ENCODE measurements at regions of chr1 and their contacts with region 1.

Region 1: DNA sequence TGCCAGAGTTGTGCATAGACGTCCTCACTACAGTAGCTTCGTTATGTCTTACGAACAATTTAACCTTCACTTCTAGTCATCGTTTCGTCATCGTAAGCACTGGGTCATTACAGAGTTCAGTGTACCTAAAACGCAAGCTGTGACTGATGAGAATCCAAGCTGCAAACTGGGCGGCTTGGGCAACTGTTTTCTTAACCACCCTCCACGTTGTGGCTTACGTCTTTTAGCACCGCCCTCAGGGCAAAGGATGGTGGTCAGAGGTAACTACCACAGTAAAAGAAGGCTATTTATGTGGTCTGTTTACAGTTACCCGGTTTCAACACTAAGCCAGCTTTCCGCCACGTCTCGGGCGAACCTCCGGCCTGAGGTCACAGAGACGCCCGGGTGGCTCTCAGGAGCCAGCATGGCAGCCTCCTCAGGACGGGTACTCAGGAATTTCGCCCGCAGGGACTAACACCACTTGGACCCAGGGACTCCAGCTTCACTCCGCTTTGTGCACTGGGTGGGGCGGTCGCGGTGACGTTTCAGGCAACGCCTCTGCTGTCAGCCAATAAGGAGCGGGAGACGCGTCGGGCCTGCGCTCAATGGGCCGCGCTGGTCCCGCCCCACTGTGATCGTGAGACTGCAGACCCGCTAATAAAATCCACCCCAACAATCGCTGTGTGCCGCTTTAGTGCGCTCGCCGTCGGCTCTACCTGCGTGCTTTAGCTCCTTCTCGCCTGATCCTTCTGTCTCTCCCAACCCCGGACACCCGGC is at the start of gene CTH:
- DNase-seq: peak; percentile 95
- ATAC-seq: peak; percentile 98
- H3K4me3 ChIP-seq: peak within 1 kb of the TSS; percentile 85 to 88
- H3K27ac ChIP-seq: peak within 1 kb of the TSS; percentile 65
- H3K4me1 ChIP-seq: peaks cover 6 to 25% of the 10 kb centered on the region in 2 experiments
- H3K27me3 ChIP-seq: no peaks in the 10 kb centered on the region
- CTCF ChIP-seq: no peak
- POLR2A ChIP-seq: peak; percentile 97
- RAD21 ChIP-seq: no peak
- total RNA-seq, gene CTH: 14.7 TPM

Region 2: GRCh38 chr1:69836971-69837636 is 573.7 kb before region 1 on chr1:
- CTCF ChIA-PET with region 1: no interaction called
- POLR2A ChIA-PET with region 1: no interaction called
- RAD21 ChIA-PET with region 1: no interaction called
- intact Hi-C with region 1: no loop called
- DNase-seq: no peak
- ATAC-seq: no peak
- H3K4me3 ChIP-seq: no peak overlapping the region
- H3K27ac ChIP-seq: no peak overlapping the region
- H3K4me1 ChIP-seq: no peaks in the 10 kb centered on the region
- H3K27me3 ChIP-seq: 0 out of 2 replicates have a peak, but pooled peaks cover 3% of the 10 kb centered on the region
- CTCF ChIP-seq: no peak
- POLR2A ChIP-seq: no peak
- RAD21 ChIP-seq: no peak

Region 3: GRCh38 chr1:70221241-70222121 is 189.3 kb before region 1 on chr1 and contains the start of gene SRSF11:
- CTCF ChIA-PET with region 1: no interaction called
- POLR2A ChIA-PET with region 1: no interaction called
- RAD21 ChIA-PET with region 1: no interaction called
- intact Hi-C with region 1: loop called (anchors 10 kb)
- DNase-seq: peak; percentile 85
- ATAC-seq: peak; percentile 96
- H3K4me3 ChIP-seq: peak within 1 kb of the TSS; percentile 74 to 78
- H3K27ac ChIP-seq: peak within 1 kb of the TSS; percentile 96
- H3K4me1 ChIP-seq: peaks cover 4 to 16% of the 10 kb centered on the region in 2 experiments; a peak in 3 of 4 replicates
- H3K27me3 ChIP-seq: no peaks in the 10 kb centered on the region
- CTCF ChIP-seq: no peak
- POLR2A ChIP-seq: peak; percentile 55
- RAD21 ChIP-seq: no peak
- total RNA-seq, gene SRSF11: 166 TPM

Region 4: DNA sequence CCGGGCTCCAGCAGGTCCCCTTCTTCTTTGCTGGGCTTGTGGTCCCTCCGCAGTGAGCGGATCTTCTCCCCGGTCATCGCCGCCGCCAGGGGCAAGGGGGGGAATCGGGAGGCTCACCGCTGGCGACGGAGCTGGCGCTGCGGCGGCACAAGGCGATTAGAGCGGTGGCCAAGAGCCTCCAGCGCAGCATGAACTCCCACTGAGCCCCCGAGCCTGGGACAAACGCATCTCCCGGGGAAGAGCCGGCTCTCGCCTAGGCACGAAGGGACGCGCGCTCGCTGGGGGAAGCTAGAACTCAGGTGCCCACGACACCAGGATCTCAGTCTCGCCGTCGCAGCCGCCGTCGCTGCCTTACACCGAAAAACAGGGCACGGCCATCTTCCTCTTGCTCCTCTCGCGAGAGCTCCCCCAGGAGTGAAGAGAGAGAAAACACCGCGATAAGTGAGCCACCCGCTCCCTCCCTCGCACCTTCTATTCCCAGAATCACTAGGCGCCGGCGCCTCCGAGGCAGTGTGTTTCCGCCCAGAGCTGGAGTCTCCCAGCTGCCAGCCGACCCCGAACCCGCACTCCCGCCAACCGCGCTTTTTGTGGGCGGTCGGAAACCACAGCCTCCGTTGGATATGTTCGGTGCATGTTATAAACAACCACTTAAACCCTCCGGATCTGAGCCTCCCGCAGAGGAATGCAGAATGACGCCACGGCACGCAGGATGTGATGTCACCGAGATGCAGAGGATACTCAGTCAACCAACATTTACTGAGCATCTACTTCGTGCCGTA is 56.3 kb before region 1 on chr1 and contains the start of gene ANKRD13C:
- CTCF ChIA-PET with region 1: no interaction called
- POLR2A ChIA-PET with region 1: interaction called, 17 read pairs
- RAD21 ChIA-PET with region 1: no interaction called
- intact Hi-C with region 1: loop called (anchors 2 kb)
- DNase-seq: peak; percentile 92
- ATAC-seq: peak; percentile 93
- H3K4me3 ChIP-seq: peak within 1 kb of the TSS; percentile 88 to 95
- H3K27ac ChIP-seq: peak within 1 kb of the TSS; percentile 89
- H3K4me1 ChIP-seq: peaks cover 10 to 19% of the 10 kb centered on the region in 2 experiments; a peak in 3 of 4 replicates
- H3K27me3 ChIP-seq: no peaks in the 10 kb centered on the region
- CTCF ChIP-seq: 0 out of 6 replicates have a peak, but pooled peaks of 1 of the 3 experiments have one; percentile 4
- POLR2A ChIP-seq: peak; percentile 86
- RAD21 ChIP-seq: no peak; the same call in 1 of the 2 replicates
- total RNA-seq, gene ANKRD13C: 21.1 TPM

Region 5: DNA sequence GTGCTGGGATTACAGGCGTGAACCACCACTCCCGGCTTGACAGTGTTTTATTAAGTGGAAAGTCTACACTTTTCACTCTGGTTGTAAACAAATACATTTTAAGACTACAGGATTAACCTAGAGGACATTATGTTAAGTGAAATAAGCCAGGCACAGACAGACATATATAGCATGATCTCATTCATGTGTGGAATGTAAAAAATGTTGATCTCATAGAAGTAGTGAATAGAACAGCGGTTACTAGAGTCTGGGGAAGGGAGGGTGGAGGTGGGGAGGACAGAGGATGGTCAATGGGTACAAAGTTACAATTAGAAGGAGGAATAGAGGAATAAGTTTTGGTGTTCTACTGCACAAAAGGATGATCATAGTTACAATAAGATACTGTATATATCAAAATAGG is 17.2 kb after region 1 on chr1:
- CTCF ChIA-PET with region 1: no interaction called
- POLR2A ChIA-PET with region 1: interaction called, 12 read pairs
- RAD21 ChIA-PET with region 1: no interaction called
- intact Hi-C with region 1: no loop called
- DNase-seq: no peak
- ATAC-seq: no peak
- H3K4me3 ChIP-seq: no peak overlapping the region
- H3K27ac ChIP-seq: no peak overlapping the region
- H3K4me1 ChIP-seq: peaks cover 12 to 25% of the 10 kb centered on the region in 2 experiments
- H3K27me3 ChIP-seq: no peaks in the 10 kb centered on the region
- CTCF ChIP-seq: no peak
- POLR2A ChIP-seq: no peak
- RAD21 ChIP-seq: no peak

Region 6: DNA sequence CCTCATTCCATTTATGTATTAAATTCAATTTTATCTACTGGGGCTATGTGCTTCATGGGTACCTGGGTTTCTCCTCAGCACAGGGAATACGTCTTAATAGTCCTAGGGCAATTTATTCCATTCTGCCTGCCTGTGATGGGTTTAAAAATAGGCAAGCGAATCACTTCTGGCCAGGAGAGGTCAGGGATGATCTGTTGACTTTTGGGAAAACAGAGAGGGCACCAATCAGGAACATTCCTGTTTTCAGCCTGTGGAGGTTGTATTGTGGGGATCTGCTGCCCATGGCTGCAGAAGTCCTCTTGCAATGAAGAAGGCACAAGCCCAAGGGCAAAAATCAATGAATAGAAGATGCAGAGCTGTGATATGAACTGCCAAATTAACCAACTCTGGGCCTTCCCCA is 303.4 kb after region 1 on chr1:
- CTCF ChIA-PET with region 1: no interaction called
- POLR2A ChIA-PET with region 1: no interaction called
- RAD21 ChIA-PET with region 1: no interaction called
- intact Hi-C with region 1: no loop called
- DNase-seq: no peak
- ATAC-seq: no peak
- H3K4me3 ChIP-seq: no peak overlapping the region
- H3K27ac ChIP-seq: no peak overlapping the region
- H3K4me1 ChIP-seq: no peaks in the 10 kb centered on the region
- H3K27me3 ChIP-seq: peaks cover 9% of the 10 kb centered on the region; the same call in 1 of the 2 replicates
- CTCF ChIP-seq: no peak
- POLR2A ChIP-seq: no peak
- RAD21 ChIP-seq: no peak